Activated CD4-positive, alpha-beta memory T cell treated with anti-CD3 and anti-CD28 coated beads for 36 hours (primary cell): ENCODE measurements at regions of chr9 and their contacts with region 1.

Region 1: GRCh38 chr9:13427587-13427986 is 148.1 kb upstream of the MPDZ start:
- DNase-seq: no peak
- H3K4me3 Mint-ChIP-seq: no peak overlapping the region
- H3K27ac Mint-ChIP-seq: no peak overlapping the region
- H3K4me1 Mint-ChIP-seq: no peaks in the 10 kb centered on the region
- H3K27me3 Mint-ChIP-seq: no peaks in the 10 kb centered on the region

Region 2: DNA sequence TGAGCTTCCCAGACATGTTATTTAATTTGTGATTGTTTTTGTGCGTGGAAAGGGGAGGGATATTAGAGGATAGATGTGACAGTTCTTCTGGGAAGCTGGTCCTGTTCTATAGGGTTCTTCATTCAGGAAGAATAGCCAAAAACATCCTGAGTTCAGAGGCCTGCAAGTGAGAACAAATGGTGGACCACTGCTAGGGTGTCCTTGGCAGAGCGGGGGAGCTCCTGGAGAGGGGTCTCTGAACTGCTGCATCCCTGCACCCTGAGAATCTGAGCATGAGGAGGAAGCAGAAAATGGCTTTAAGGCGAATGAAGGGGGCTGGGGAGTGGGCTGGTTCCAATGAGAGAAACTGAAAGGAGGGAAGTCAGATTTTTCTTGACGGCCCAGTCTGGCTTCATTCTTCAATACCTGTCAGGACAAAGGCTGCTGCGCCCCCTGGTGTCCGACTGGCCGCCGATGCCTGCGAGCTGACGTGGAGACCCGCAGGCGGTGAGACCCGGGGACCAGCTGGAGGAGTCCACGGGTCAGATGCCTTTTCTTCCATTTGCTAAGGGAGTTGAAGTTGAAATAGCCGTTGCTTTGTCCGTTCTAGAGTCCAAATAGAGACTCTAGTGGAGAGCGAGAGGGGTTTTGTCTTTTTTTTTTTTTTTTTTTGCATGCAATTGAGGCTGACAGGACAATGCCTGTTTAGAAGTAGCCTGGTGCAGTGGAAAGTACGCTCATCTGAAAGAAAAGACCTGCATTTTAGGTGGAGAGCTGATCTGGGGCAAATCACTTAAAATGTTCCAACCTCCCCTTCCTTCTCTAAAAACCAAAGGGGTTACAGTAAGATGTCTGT is 925.9 kb after region 1 on chr9:
- CTCF ChIA-PET with region 1: interaction called, 50 read pairs
- POLR2A ChIA-PET with region 1: no interaction called
- intact Hi-C with region 1: loop called (anchors 1 kb)
- DNase-seq: peak; percentile 85
- H3K4me3 Mint-ChIP-seq: no peak overlapping the region
- H3K27ac Mint-ChIP-seq: no peak overlapping the region
- H3K4me1 Mint-ChIP-seq: peaks cover 4% of the 10 kb centered on the region
- H3K27me3 Mint-ChIP-seq: peaks cover 59% of the 10 kb centered on the region

Region 3: DNA sequence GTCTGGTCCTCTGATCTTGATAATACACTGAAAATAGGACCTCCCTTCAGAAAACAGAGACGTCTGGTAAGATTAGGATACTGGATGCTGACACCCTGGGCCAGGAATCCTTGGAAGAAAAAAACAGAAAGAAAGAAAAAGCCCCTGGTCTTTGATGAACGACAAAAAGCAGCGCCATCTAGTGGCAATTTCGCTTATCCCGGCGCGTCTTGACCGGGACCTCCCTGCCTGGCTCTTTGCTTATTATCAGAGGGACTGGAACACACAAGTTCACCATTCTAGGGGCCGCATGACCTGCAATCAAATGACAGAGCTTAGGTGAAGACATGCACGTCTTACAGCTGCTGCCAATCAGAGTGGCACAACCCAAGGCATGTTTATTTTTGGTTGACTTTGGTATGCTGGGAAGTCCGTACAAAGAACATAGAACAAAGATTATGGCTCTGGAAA is 1001.2 kb after region 1 on chr9:
- CTCF ChIA-PET with region 1: interaction called, 5 read pairs
- POLR2A ChIA-PET with region 1: no interaction called
- intact Hi-C with region 1: loop called (anchors 10 kb)
- DNase-seq: peak; percentile 41
- H3K4me3 Mint-ChIP-seq: no peak overlapping the region
- H3K27ac Mint-ChIP-seq: no peak overlapping the region
- H3K4me1 Mint-ChIP-seq: no peaks in the 10 kb centered on the region
- H3K27me3 Mint-ChIP-seq: peaks cover 5% of the 10 kb centered on the region

Region 4: GRCh38 chr9:14768405-14769229 is 1341.0 kb after region 1 on chr9:
- CTCF ChIA-PET with region 1: interaction called, 5 read pairs
- POLR2A ChIA-PET with region 1: no interaction called
- intact Hi-C with region 1: loop called (anchors 10 kb)
- DNase-seq: no peak
- H3K4me3 Mint-ChIP-seq: no peak overlapping the region
- H3K27ac Mint-ChIP-seq: no peak overlapping the region
- H3K4me1 Mint-ChIP-seq: no peaks in the 10 kb centered on the region
- H3K27me3 Mint-ChIP-seq: peaks cover 12% of the 10 kb centered on the region